Left colon (tissue), 2 donors: ENCODE measurements at regions of chr14 and their contacts with region 1.

Region 1: DNA sequence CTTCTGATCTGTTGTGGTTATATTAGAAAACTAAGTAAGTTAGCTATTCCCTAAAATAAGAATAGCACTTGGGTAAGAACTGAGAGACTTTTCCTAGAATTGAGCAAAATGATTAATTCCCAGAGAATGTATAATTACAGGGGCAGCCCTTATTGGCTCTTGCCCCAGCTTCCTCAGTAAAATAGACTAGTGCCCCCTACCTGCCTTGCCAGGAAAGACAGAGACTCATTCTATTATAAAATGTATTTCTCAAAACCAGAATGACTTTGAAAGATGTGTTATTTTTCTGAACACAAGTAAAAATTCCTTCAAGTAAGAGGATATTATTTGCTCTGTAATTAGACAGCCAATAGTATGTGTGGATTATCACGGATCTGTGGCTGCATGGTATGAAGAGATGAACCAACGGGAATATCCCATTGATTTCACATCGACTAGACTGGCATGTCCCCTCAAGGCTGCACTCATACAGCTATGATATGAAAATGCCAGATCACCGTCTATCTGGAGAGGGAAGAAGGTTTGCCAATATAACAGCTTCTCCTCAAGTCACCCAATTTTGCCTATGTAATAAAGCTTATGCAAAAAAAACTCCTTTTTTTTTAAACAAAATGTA is 7.4 kb upstream of the GLRX5 start:
- DNase-seq: peak in 1 of 2 donors; percentile 71
- ATAC-seq: no peak

Region 2: GRCh38 chr14:95233702-95234241 is 293.7 kb before region 1 on chr14:
- intact Hi-C with region 1: no loop called
- DNase-seq: peak; percentile 43 to 68
- ATAC-seq: peak; percentile 8

Region 3: DNA sequence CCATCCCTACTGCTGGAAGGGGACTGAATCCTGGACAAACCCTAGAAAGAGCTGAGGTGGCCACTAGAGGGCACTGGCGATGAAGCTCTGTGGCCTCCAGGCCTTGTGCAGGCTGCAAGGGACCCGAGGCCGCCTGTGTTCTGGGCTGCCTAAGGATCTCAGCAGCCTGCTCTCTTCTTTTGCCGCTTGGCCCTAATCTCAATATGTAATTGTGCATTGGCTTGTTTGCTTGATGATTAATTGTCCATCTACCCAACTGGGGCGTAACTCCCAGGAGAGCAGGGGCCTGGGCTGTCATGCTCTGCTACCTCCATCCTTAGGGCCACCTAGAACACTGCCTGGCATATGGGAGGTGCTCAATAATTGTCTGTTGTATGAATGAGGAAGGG is 84.9 kb before region 1 on chr14:
- intact Hi-C with region 1: loop called (anchors 5 kb)
- DNase-seq: peak; percentile 71 to 91
- ATAC-seq: peak; percentile 86